Ascending aorta (tissue), 2 donors: ENCODE measurements at regions of chr17 and their contacts with region 1.

Region 1: GRCh38 chr17:61389670-61390478 is 9.8 kb upstream of the TBX2 start:
- DNase-seq: no peak
- H3K4me3 ChIP-seq: peak overlapping the region; percentile 25 to 33
- H3K27ac ChIP-seq: no peak overlapping the region
- H3K4me1 ChIP-seq: peaks cover 0 to 7% of the 10 kb centered on the region in 2 donors
- H3K27me3 ChIP-seq: no peaks in the 10 kb centered on the region
- CTCF ChIP-seq: peak; percentile 78 to 99 (median 91)

Region 2: DNA sequence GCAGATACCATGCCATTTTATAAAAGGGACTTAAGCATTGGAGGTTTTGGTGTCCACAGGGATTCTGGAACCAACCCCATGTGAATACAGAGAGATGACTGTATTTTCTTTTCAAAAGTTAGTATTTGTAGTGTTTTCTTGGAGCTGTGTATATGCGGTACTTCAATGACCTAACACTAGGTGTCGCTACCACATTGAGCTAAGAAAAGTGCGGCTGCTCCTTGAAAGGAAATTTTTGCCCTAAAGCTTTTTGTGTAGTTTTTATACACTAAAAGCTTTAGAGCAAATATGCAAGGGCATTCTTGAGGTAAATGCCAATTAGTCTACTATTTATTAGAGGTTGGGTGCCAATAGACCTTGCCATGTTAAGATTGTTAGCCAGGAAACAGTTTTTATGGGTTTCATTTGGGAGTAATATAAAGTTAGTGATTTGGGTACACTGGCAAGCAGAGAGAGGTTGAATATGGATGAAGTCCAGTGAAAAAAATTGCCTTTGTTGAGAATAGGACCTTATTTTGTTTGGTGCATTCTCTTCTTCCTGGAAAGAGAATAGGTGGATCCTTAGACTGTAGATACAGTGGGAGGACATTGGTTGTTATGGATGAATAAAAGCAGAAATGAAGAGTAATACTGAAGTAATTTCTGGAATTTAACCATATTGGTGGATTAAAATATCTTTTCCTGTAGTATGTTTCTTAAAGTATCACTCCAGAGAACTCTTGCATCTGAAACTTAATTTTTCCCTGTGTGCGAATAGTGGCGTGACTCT is 668.9 kb before region 1 on chr17:
- intact Hi-C with region 1: loop called (anchors 5 kb)
- DNase-seq: no peak
- H3K4me3 ChIP-seq: no peak overlapping the region
- H3K27ac ChIP-seq: no peak overlapping the region
- H3K4me1 ChIP-seq: peaks cover 0 to 3% of the 10 kb centered on the region in 2 donors
- H3K27me3 ChIP-seq: no peaks in the 10 kb centered on the region
- CTCF ChIP-seq: peak; percentile 76 to 88 (median 87)

Region 3: GRCh38 chr17:60901806-60902205 is 488.1 kb before region 1 on chr17:
- intact Hi-C with region 1: loop called (anchors 5 kb)
- DNase-seq: no peak
- H3K4me3 ChIP-seq: peak overlapping the region in 1 of 2 donors; percentile 26
- H3K27ac ChIP-seq: peak overlapping the region; percentile 71 to 86
- H3K4me1 ChIP-seq: peaks cover 0 to 10% of the 10 kb centered on the region in 2 donors
- H3K27me3 ChIP-seq: no peaks in the 10 kb centered on the region
- CTCF ChIP-seq: no peak

Region 4: GRCh38 chr17:61002316-61002736 is 387.5 kb before region 1 on chr17:
- intact Hi-C with region 1: loop called (anchors 1 kb)
- DNase-seq: no peak
- H3K4me3 ChIP-seq: no peak overlapping the region
- H3K27ac ChIP-seq: no peak overlapping the region
- H3K4me1 ChIP-seq: no peaks in the 10 kb centered on the region
- H3K27me3 ChIP-seq: no peaks in the 10 kb centered on the region
- CTCF ChIP-seq: peak; percentile 29 to 54 (median 53)

Region 5: GRCh38 chr17:61128661-61129115 is 261.2 kb before region 1 on chr17:
- intact Hi-C with region 1: loop called (anchors 5 kb)
- DNase-seq: no peak
- H3K4me3 ChIP-seq: no peak overlapping the region
- H3K27ac ChIP-seq: peak overlapping the region; percentile 44 to 71
- H3K4me1 ChIP-seq: peaks cover 0 to 11% of the 10 kb centered on the region in 2 donors
- H3K27me3 ChIP-seq: no peaks in the 10 kb centered on the region
- CTCF ChIP-seq: no peak

Region 6: GRCh38 chr17:61325382-61326073 is 64.3 kb before region 1 on chr17:
- intact Hi-C with region 1: loop called (anchors 5 kb)
- DNase-seq: no peak
- H3K4me3 ChIP-seq: no peak overlapping the region
- H3K27ac ChIP-seq: peak overlapping the region in 1 of 2 donors; percentile 45
- H3K4me1 ChIP-seq: peaks cover 4 to 20% of the 10 kb centered on the region in 2 donors
- H3K27me3 ChIP-seq: no peaks in the 10 kb centered on the region
- CTCF ChIP-seq: no peak

Region 7: GRCh38 chr17:61504697-61505349 is 114.9 kb after region 1 on chr17:
- intact Hi-C with region 1: no loop called
- DNase-seq: no peak
- H3K4me3 ChIP-seq: no peak overlapping the region
- H3K27ac ChIP-seq: no peak overlapping the region
- H3K4me1 ChIP-seq: no peaks in the 10 kb centered on the region
- H3K27me3 ChIP-seq: no peaks in the 10 kb centered on the region
- CTCF ChIP-seq: no peak